ENCODE measurements at regions of chr6 and their contacts with region 1.

Region 1: DNA sequence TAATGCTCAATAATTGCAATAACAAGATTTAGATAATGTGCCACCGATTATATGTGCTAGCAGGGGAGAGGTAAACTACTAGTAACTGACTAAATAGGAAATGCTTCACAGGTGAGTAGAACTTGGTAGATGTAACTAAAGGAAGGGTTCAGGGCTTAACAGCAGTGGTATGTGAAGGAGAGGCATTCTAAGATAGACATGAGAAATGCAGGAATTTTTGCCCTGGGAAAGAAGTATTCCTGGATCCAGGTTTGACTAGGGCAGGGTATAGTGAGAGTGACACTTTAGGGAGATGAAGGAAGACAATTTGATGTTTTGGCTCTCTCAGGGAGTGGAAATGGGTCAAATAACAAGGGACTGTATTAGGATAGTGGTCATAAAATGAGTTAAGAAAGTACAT is 143.2 kb downstream of the RFPL4B start:
- DNase-seq: no peak
- ATAC-seq: no peak
- H3K4me3 ChIP-seq: no peak overlapping the region
- H3K27ac ChIP-seq: no peak overlapping the region
- H3K4me1 ChIP-seq: no peaks in the 10 kb centered on the region
- H3K27me3 ChIP-seq: no peaks in the 10 kb centered on the region

Region 2: DNA sequence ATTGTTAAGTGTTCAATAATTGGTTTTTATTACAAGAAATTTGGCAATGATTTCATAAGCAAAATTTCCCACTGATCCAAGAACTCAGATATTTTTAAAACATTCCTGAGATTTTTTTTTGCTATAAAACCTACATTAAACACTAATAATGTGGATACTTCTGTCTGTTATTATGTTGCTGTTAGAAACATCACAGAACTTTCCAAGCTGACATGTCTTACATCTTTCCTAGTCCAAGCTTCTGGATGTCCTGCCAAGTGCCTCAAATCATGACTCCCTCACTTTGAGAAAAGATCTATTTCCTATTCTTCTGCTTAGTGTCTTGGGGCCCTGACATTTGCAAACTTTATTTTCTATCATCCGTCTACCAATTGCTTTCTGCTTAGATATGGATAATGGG is 32.4 kb before region 1 on chr6:
- intact Hi-C with region 1: no loop called
- DNase-seq: no peak
- ATAC-seq: no peak
- H3K4me3 ChIP-seq: no peak overlapping the region
- H3K27ac ChIP-seq: no peak overlapping the region
- H3K4me1 ChIP-seq: no peaks in the 10 kb centered on the region
- H3K27me3 ChIP-seq: no peaks in the 10 kb centered on the region

Region 3: GRCh38 chr6:112600168-112600567 is 109.9 kb after region 1 on chr6:
- intact Hi-C with region 1: loop called in 1 of 4 experiments (anchors 10 kb)
- DNase-seq: no peak
- ATAC-seq: no peak
- H3K4me3 ChIP-seq: no peak overlapping the region
- H3K27ac ChIP-seq: no peak overlapping the region
- H3K4me1 ChIP-seq: no peaks in the 10 kb centered on the region
- H3K27me3 ChIP-seq: no peaks in the 10 kb centered on the region

Measured in right cardiac atrium (tissue), 5 donors.